ENCODE measurements at regions of chr13 and their contacts with region 1.

Region 1: GRCh38 chr13:77480066-77480465 is 55.4 kb upstream of the SCEL start:
- DNase-seq: no peak
- H3K4me3 ChIP-seq: no peak overlapping the region
- H3K27ac ChIP-seq: no peak overlapping the region
- H3K4me1 ChIP-seq: no peaks in the 10 kb centered on the region; a peak in 1 of 4 replicates
- H3K27me3 ChIP-seq: no peaks in the 10 kb centered on the region
- CTCF ChIP-seq: no peak
- EP300 ChIP-seq: no peak
- RAD21 ChIP-seq: no peak

Region 2: GRCh38 chr13:77016888-77017623 is 463.0 kb before region 1 on chr13:
- CTCF ChIA-PET with region 1: interaction called, 10 read pairs
- POLR2A ChIA-PET with region 1: no interaction called
- DNase-seq: no peak
- H3K4me3 ChIP-seq: no peak overlapping the region
- H3K27ac ChIP-seq: no peak overlapping the region
- H3K4me1 ChIP-seq: no peaks in the 10 kb centered on the region; a peak in 3 of 4 replicates
- H3K27me3 ChIP-seq: no peaks in the 10 kb centered on the region
- CTCF ChIP-seq: peak; percentile 24
- EP300 ChIP-seq: no peak
- RAD21 ChIP-seq: no peak

Region 3: DNA sequence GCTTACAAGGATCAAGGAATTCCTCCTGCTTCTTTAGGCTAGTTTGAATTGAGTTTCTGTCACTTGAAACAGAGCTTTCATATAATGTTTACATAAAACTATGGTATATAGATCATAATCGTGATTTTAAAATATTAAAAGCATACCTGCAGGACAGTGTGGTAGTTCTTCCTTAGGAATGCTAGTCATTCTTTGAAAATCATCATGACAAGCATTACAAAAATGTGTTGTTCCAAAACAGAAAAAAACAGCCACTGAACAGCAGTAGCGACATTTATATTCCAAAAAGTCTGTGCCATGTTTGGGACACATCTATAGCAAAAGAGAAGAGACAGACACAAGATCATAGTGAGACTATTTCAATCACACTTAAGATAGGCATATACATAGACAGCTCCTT is 429.2 kb before region 1 on chr13:
- CTCF ChIA-PET with region 1: interaction called, 13 read pairs
- POLR2A ChIA-PET with region 1: no interaction called
- DNase-seq: no peak
- H3K4me3 ChIP-seq: no peak overlapping the region
- H3K27ac ChIP-seq: no peak overlapping the region
- H3K4me1 ChIP-seq: no peaks in the 10 kb centered on the region; a peak in 2 of 4 replicates
- H3K27me3 ChIP-seq: no peaks in the 10 kb centered on the region
- CTCF ChIP-seq: no peak
- EP300 ChIP-seq: no peak
- RAD21 ChIP-seq: no peak

Region 4: DNA sequence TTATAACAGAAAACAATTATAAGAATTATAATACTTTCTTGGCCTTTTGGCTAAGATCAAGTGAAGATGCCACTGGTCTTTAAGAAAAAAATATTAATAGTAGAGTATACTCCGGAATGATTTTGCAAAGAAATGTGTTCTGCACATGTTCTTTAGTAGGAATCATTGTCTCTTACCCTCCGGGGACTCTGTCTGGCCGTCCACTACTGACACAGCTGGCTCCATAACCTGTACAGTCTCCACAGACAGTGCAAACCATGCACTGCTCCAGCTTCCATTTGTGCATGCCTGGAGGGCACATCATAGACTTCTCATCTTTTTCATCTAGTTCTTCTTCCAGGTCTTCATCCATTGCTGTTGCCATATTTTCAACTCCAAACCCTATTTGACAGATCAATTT is 229.1 kb before region 1 on chr13:
- CTCF ChIA-PET with region 1: no interaction called
- POLR2A ChIA-PET with region 1: no interaction called
- DNase-seq: peak; percentile 8
- H3K4me3 ChIP-seq: no peak overlapping the region
- H3K27ac ChIP-seq: peak overlapping the region in 1 of 2 experiments; percentile 16; a peak in 1 of 4 replicates
- H3K4me1 ChIP-seq: no peaks in the 10 kb centered on the region; a peak in 1 of 4 replicates
- H3K27me3 ChIP-seq: no peaks in the 10 kb centered on the region
- CTCF ChIP-seq: no peak
- EP300 ChIP-seq: no peak
- RAD21 ChIP-seq: no peak

Region 5: GRCh38 chr13:77337162-77337561 is 142.9 kb before region 1 on chr13:
- CTCF ChIA-PET with region 1: interaction called, 10 read pairs
- POLR2A ChIA-PET with region 1: no interaction called
- DNase-seq: no peak
- H3K4me3 ChIP-seq: no peak overlapping the region
- H3K27ac ChIP-seq: no peak overlapping the region
- H3K4me1 ChIP-seq: peaks cover 0 to 8% of the 10 kb centered on the region in 2 experiments; a peak in 2 of 4 replicates
- H3K27me3 ChIP-seq: 0 out of 2 replicates have a peak, but pooled peaks cover 8% of the 10 kb centered on the region
- CTCF ChIP-seq: no peak
- EP300 ChIP-seq: no peak
- RAD21 ChIP-seq: no peak

Region 6: GRCh38 chr13:77374786-77375185 is 105.3 kb before region 1 on chr13:
- CTCF ChIA-PET with region 1: no interaction called
- POLR2A ChIA-PET with region 1: no interaction called
- DNase-seq: no peak
- H3K4me3 ChIP-seq: no peak overlapping the region
- H3K27ac ChIP-seq: no peak overlapping the region
- H3K4me1 ChIP-seq: no peaks in the 10 kb centered on the region
- H3K27me3 ChIP-seq: no peaks in the 10 kb centered on the region
- CTCF ChIP-seq: no peak
- EP300 ChIP-seq: no peak
- RAD21 ChIP-seq: no peak

Region 7: GRCh38 chr13:77415253-77416071 is 64.6 kb before region 1 on chr13:
- CTCF ChIA-PET with region 1: interaction called, 11 read pairs
- POLR2A ChIA-PET with region 1: no interaction called
- DNase-seq: peak; percentile 1
- H3K4me3 ChIP-seq: no peak overlapping the region
- H3K27ac ChIP-seq: no peak overlapping the region; a peak in 1 of 4 replicates
- H3K4me1 ChIP-seq: peaks cover 0 to 13% of the 10 kb centered on the region in 2 experiments; a peak in 2 of 4 replicates
- H3K27me3 ChIP-seq: no peaks in the 10 kb centered on the region
- CTCF ChIP-seq: no peak
- EP300 ChIP-seq: no peak
- RAD21 ChIP-seq: no peak

Region 8: GRCh38 chr13:77465603-77466205 is 14.4 kb before region 1 on chr13:
- CTCF ChIA-PET with region 1: interaction called, 34 read pairs
- POLR2A ChIA-PET with region 1: no interaction called
- DNase-seq: no peak
- H3K4me3 ChIP-seq: no peak overlapping the region
- H3K27ac ChIP-seq: no peak overlapping the region
- H3K4me1 ChIP-seq: no peaks in the 10 kb centered on the region
- H3K27me3 ChIP-seq: no peaks in the 10 kb centered on the region
- CTCF ChIP-seq: no peak
- EP300 ChIP-seq: no peak
- RAD21 ChIP-seq: no peak

Region 9: GRCh38 chr13:77502104-77502720 is 22.1 kb after region 1 on chr13:
- CTCF ChIA-PET with region 1: interaction called, 20 read pairs
- POLR2A ChIA-PET with region 1: no interaction called
- DNase-seq: no peak
- H3K4me3 ChIP-seq: no peak overlapping the region
- H3K27ac ChIP-seq: no peak overlapping the region
- H3K4me1 ChIP-seq: no peaks in the 10 kb centered on the region; a peak in 1 of 4 replicates
- H3K27me3 ChIP-seq: no peaks in the 10 kb centered on the region; the same call in 1 of the 2 replicates
- CTCF ChIP-seq: no peak
- EP300 ChIP-seq: no peak
- RAD21 ChIP-seq: no peak

Region 10: DNA sequence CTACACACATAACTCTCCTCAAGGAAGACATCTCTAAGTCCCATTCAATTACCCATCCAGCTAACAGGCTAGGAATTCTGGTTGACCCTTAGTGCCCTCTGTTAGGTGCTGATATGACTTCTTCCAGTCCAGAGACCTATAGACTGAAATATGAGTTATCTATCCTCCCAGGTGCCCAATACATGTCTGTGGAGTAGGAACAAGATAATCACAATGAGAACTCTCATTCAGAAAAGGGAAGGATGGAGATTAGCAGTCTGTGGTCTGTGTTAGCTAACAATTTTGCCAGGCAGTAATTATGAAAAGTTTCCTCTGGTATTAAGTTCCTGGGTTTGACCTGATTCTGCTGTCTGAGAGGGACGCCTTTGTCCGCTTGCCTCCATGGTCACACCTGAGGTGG is 173.2 kb after region 1 on chr13:
- CTCF ChIA-PET with region 1: no interaction called
- POLR2A ChIA-PET with region 1: no interaction called
- DNase-seq: no peak
- H3K4me3 ChIP-seq: no peak overlapping the region
- H3K27ac ChIP-seq: no peak overlapping the region
- H3K4me1 ChIP-seq: no peaks in the 10 kb centered on the region
- H3K27me3 ChIP-seq: no peaks in the 10 kb centered on the region
- CTCF ChIP-seq: no peak
- EP300 ChIP-seq: no peak
- RAD21 ChIP-seq: no peak

Region 11: GRCh38 chr13:77789376-77789775 is 309.3 kb after region 1 on chr13:
- CTCF ChIA-PET with region 1: no interaction called
- POLR2A ChIA-PET with region 1: no interaction called
- DNase-seq: no peak
- H3K4me3 ChIP-seq: no peak overlapping the region
- H3K27ac ChIP-seq: no peak overlapping the region
- H3K4me1 ChIP-seq: no peaks in the 10 kb centered on the region; a peak in 1 of 4 replicates
- H3K27me3 ChIP-seq: no peaks in the 10 kb centered on the region
- CTCF ChIP-seq: no peak
- EP300 ChIP-seq: no peak
- RAD21 ChIP-seq: no peak

Measured in SK-N-SH (cell line).